PC-9 (cell line): ENCODE measurements at regions of chr20 and their contacts with region 1.

Region 1: DNA sequence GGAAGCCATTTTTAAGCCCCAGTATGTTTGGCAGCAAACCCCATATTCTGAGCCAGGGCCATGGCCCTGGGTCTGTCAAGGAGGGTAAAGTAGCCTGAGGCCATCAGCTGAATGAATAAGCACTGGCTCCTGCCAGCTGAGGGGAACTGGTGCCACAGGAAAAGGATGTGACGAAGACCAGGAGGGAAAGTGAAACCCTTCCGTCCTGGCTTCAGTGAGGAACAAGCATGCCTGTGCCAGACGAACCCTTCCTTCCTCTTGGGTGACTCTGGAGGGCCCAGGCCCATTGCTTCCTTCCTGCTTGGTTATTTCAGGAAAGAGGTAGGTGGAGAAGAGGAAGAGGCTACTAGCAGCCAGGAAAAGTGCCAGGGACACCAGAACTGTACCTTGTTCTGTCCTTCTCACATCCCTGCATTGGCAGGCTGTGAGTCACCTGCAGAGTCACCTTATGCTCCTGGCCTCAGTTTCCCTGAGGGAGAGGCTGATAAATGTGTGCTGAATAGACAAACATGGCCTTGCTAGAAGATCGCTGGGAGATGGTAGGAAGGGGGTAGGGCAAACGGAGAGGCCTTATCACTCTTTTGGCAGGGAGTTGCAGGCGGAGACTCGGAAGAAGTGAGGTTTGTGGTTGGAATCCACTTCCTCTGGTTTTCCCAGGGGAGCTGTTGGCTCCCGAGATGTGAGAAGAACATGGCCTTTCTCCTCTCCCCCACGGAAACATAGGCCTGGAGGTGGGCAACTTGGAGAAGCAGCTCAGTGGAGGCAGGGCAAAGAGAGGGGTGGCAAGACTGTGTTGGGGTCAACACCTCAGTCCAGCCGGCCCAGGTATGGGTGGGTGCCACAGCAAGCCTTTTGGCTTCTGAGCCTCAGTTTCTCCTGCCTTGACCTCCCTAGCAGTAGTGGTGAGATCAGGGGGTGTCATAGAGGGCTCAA is 37.4 kb downstream of the COX4I2 start:
- DNase-seq: peak in 1 of 2 experiments; percentile 53
- H3K4me3 ChIP-seq: no peak overlapping the region
- H3K27ac ChIP-seq: peak overlapping the region; percentile 24; the same call in 1 of the 2 replicates
- H3K4me1 ChIP-seq: peaks cover 27% of the 10 kb centered on the region
- H3K27me3 ChIP-seq: no peaks in the 10 kb centered on the region
- CTCF ChIP-seq: no peak

Region 2: GRCh38 chr20:31644701-31645100 is 30.5 kb before region 1 on chr20:
- CTCF ChIA-PET with region 1: no interaction called
- POLR2A ChIA-PET with region 1: no interaction called
- intact Hi-C with region 1: no loop called
- DNase-seq: no peak
- H3K4me3 ChIP-seq: no peak overlapping the region
- H3K27ac ChIP-seq: no peak overlapping the region
- H3K4me1 ChIP-seq: no peaks in the 10 kb centered on the region
- H3K27me3 ChIP-seq: no peaks in the 10 kb centered on the region
- CTCF ChIP-seq: no peak

Region 3: GRCh38 chr20:31704225-31705119 is 29.3 kb after region 1 on chr20:
- CTCF ChIA-PET with region 1: no interaction called
- POLR2A ChIA-PET with region 1: no interaction called
- intact Hi-C with region 1: loop called (anchors 2 kb)
- DNase-seq: peak; percentile 92 to 98
- H3K4me3 ChIP-seq: peak overlapping the region; percentile 29; the same call in 1 of the 2 replicates
- H3K27ac ChIP-seq: peak overlapping the region; percentile 95
- H3K4me1 ChIP-seq: peaks cover 90% of the 10 kb centered on the region
- H3K27me3 ChIP-seq: no peaks in the 10 kb centered on the region
- CTCF ChIP-seq: no peak

Region 4: DNA sequence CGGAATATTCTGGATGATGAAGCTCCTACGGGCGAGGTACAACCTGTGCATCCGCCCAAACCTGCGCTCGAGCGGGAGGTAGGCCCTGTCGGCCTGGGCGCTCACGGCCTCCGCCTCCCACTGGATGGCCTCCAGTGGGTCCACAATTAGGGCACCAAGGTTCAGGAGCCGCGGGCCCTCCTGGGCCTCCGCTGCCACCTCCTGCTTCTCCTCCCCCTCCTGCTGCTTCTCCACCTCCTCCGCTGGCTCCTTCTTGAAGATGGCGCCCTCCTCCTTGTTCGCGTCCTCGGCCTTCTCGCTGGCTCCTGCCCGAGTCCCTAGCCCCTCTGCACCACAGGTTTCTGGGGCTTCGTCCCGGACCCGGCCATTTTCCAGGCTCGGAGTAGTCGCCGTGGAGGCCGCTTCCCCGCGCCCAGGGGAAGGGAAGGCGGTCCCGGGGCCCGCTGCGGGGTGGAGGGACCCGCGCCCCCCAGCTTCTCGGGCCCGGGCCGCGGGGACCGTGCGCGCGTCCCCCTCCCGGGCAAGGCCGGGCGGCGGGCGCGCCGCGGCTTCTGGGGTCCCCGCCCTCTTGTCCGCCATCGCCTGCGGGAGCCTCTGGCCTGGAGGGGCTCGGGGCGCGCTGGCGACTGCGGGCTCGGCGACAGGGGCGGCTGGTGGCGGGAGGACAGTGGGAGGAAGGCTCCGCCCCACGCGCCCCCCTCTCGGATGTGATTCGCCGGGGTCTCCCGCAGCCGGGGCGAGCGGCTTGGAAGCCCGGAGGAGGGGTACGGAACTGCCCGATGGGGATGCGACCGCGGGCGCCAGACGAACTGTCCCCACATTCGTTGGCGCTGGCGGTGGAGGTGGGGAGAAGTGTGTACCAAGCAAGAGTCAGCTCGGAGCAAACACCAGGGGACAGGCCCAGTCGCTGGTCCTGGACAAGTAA is 514.8 kb after region 1 on chr20:
- CTCF ChIA-PET with region 1: no interaction called
- POLR2A ChIA-PET with region 1: no interaction called
- intact Hi-C with region 1: no loop called
- DNase-seq: no peak
- H3K4me3 ChIP-seq: no peak overlapping the region
- H3K27ac ChIP-seq: no peak overlapping the region
- H3K4me1 ChIP-seq: no peaks in the 10 kb centered on the region
- H3K27me3 ChIP-seq: no peaks in the 10 kb centered on the region
- CTCF ChIP-seq: no peak

Region 5: DNA sequence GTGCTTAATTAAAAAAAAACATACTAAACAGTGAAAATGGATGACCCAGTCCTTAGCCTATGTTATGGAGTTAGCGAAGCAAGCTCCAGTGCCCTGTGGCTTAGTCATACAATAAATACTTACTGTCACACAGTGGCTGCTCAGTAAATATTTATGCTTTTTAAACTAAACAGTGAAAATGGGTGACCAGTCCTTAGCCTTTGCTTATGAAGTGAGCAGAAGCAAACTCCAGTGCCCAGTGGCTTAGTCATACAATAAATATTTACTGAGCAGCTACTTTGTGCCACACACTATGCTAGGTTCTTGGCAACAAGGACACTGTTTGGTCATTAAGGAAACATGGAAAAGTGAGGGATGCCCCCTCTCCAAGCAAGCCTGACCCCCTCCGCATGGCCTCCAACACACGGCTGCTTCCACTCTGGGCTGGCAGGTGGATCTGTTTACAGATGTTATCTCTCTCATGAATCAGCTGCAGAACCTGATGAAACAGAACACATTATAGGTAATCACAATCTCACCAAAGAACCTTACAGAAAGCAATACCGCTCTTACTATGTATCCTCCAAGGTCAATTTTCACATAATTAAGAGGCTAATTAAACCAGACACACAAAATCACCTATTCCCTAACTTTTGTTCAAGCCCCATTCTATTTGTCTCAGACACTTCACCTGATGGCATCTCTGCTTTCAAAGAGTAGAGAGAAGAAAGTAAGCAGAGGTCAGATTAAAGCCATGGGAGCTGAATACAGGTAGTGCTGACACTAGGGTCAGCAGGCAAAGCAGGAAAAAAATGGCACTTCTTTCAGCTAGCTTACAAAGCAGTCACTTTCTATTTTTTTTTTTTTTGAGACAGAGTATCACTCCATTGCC is 1698.8 kb after region 1 on chr20:
- CTCF ChIA-PET with region 1: no interaction called
- POLR2A ChIA-PET with region 1: no interaction called
- intact Hi-C with region 1: no loop called
- DNase-seq: peak; percentile 69 to 97
- H3K4me3 ChIP-seq: no peak overlapping the region
- H3K27ac ChIP-seq: peak overlapping the region; percentile 85
- H3K4me1 ChIP-seq: peaks cover 41% of the 10 kb centered on the region
- H3K27me3 ChIP-seq: no peaks in the 10 kb centered on the region
- CTCF ChIP-seq: no peak